ENCODE measurements at regions of chr15 and their contacts with region 1.

Region 1: GRCh38 chr15:53472883-53473282 is 286.6 kb downstream of the WDR72 start:
- DNase-seq: no peak
- ATAC-seq: no peak
- H3K4me3 Mint-ChIP-seq: no peak overlapping the region
- H3K27ac Mint-ChIP-seq: no peak overlapping the region
- H3K4me1 Mint-ChIP-seq: no peaks in the 10 kb centered on the region
- H3K27me3 Mint-ChIP-seq: no peaks in the 10 kb centered on the region
- CTCF ChIP-seq: no peak

Region 2: DNA sequence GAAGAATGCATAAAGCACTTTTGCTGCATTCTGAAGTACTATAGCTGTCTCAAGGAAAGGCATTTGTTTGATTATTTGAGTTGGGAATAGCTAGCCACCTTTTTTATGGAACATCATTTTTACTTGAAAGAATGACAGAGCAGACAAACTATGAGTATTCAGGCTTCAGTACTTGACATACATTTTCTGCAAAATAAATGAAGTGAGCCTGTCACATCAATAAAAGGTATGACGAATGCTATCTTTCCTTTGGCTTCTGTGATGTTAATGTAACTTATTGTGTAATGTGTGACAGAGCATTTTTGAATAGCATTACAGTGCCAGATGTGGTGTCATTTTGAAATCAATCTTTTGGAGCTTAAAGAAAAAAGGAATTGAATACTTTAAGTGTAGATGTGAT is 242.4 kb before region 1 on chr15:
- CTCF ChIA-PET with region 1: no interaction called
- POLR2A ChIA-PET with region 1: no interaction called
- intact Hi-C with region 1: no loop called
- DNase-seq: no peak
- ATAC-seq: no peak
- H3K4me3 Mint-ChIP-seq: no peak overlapping the region
- H3K27ac Mint-ChIP-seq: no peak overlapping the region
- H3K4me1 Mint-ChIP-seq: no peaks in the 10 kb centered on the region
- H3K27me3 Mint-ChIP-seq: no peaks in the 10 kb centered on the region
- CTCF ChIP-seq: no peak

Region 3: GRCh38 chr15:53530761-53531160 is 57.9 kb after region 1 on chr15:
- CTCF ChIA-PET with region 1: no interaction called
- POLR2A ChIA-PET with region 1: no interaction called
- intact Hi-C with region 1: loop called (anchors 10 kb)
- DNase-seq: no peak
- ATAC-seq: no peak
- H3K4me3 Mint-ChIP-seq: no peak overlapping the region
- H3K27ac Mint-ChIP-seq: no peak overlapping the region
- H3K4me1 Mint-ChIP-seq: no peaks in the 10 kb centered on the region
- H3K27me3 Mint-ChIP-seq: no peaks in the 10 kb centered on the region
- CTCF ChIP-seq: no peak